Calu3 (cell line): ENCODE measurements at regions of chr6 and their contacts with region 1.

Region 1: DNA sequence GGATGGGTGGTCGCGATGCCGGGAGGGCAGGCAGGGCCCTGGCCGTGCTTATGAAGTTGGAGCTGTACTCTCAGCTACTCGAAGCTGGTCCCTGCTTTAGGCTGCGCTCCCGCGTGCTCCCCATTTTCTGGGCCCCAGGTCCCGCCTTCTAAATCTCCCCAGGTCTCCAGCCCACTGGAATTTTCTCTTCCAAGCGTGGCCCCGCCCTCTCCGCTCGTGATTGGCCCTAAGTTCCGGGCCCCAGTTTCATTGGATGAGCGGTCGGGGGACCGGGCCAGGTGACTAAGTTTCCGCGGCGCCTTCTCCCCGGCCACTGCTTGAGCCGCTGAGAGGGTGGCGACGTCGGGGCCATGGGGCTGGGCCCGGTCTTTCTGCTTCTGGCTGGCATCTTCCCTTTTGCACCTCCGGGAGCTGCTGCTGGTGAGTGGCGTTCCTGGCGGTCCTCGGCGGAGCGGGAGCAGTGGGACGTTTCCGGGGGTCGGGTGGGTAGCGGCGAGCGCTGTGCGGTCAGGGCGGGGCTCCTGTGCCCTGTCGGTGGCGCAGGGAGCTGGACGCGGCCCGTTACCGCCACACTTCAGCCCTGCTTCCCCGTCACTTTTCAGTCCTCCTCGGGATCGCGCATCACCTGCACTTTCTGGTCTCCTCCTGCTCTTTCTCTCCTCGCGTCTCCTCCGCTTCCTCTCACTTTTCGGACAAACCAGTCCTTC is at the start of gene MICA:
- DNase-seq: peak; percentile 99
- H3K4me3 Mint-ChIP-seq: peak within 1 kb of the TSS; percentile 95
- H3K27ac Mint-ChIP-seq: peak within 1 kb of the TSS; percentile 64
- H3K4me1 Mint-ChIP-seq: peaks cover 67% of the 10 kb centered on the region
- H3K27me3 Mint-ChIP-seq: no peaks in the 10 kb centered on the region
- CTCF ChIP-seq: peak; percentile 40
- total RNA-seq, gene MICA: 70.2 and 77.1 TPM in 2 replicates

Region 2: GRCh38 chr6:31414771-31415265 is 11.4 kb after region 1 on chr6:
- CTCF ChIA-PET with region 1: no interaction called
- intact Hi-C with region 1: no loop called
- DNase-seq: no peak
- H3K4me3 Mint-ChIP-seq: no peak overlapping the region
- H3K27ac Mint-ChIP-seq: no peak overlapping the region
- H3K4me1 Mint-ChIP-seq: no peaks in the 10 kb centered on the region
- H3K27me3 Mint-ChIP-seq: no peaks in the 10 kb centered on the region
- CTCF ChIP-seq: no peak

Region 3: GRCh38 chr6:31441365-31442267 is 38.2 kb after region 1 on chr6:
- CTCF ChIA-PET with region 1: interaction called, 84 read pairs
- intact Hi-C with region 1: loop called (anchors 1 kb)
- DNase-seq: peak; percentile 93
- H3K4me3 Mint-ChIP-seq: no peak overlapping the region
- H3K27ac Mint-ChIP-seq: no peak overlapping the region
- H3K4me1 Mint-ChIP-seq: peaks cover 8% of the 10 kb centered on the region
- H3K27me3 Mint-ChIP-seq: peaks cover 90% of the 10 kb centered on the region
- CTCF ChIP-seq: peak; percentile 98

Region 4: GRCh38 chr6:31493875-31494694 is 90.6 kb after region 1 on chr6:
- CTCF ChIA-PET with region 1: interaction called, 3 read pairs
- intact Hi-C with region 1: loop called (anchors 2 kb)
- DNase-seq: peak; percentile 94
- H3K4me3 Mint-ChIP-seq: peak overlapping the region; percentile 56
- H3K27ac Mint-ChIP-seq: peak overlapping the region; percentile 0
- H3K4me1 Mint-ChIP-seq: peaks cover 42% of the 10 kb centered on the region
- H3K27me3 Mint-ChIP-seq: no peaks in the 10 kb centered on the region
- CTCF ChIP-seq: peak; percentile 78

Region 5: GRCh38 chr6:31546962-31547726 is 143.7 kb after region 1 on chr6 and contains the start of gene NFKBIL1:
- CTCF ChIA-PET with region 1: no interaction called
- intact Hi-C with region 1: loop called (anchors 5 kb)
- DNase-seq: peak; percentile 98
- H3K4me3 Mint-ChIP-seq: peak within 1 kb of the TSS; percentile 71
- H3K27ac Mint-ChIP-seq: peak within 1 kb of the TSS; percentile 43
- H3K4me1 Mint-ChIP-seq: peaks cover 17% of the 10 kb centered on the region
- H3K27me3 Mint-ChIP-seq: no peaks in the 10 kb centered on the region
- CTCF ChIP-seq: no peak
- total RNA-seq, gene NFKBIL1: 33.5 and 34.0 TPM in 2 replicates